IMR-90 (cell line): ENCODE measurements at regions of chr3 and their contacts with region 1.

Region 1: GRCh38 chr3:53881691-53882593 is at the start of gene ACTR8:
- DNase-seq: peak; percentile 77
- ATAC-seq: peak; percentile 97
- H3K4me3 ChIP-seq: peak within 1 kb of the TSS; percentile 73
- H3K27ac ChIP-seq: peak within 1 kb of the TSS; percentile 97
- H3K4me1 ChIP-seq: peaks cover 8% of the 10 kb centered on the region
- H3K27me3 ChIP-seq: no peaks in the 10 kb centered on the region
- CTCF ChIP-seq: 0 out of 2 replicates have a peak, but pooled peaks have one; percentile 4
- POLR2A ChIP-seq: peak; percentile 81
- RAD21 ChIP-seq: no peak
- total RNA-seq, gene ACTR8: 31.4 and 35.8 TPM in 2 replicates

Region 2: GRCh38 chr3:53287131-53287629 is 594.8 kb before region 1 on chr3:
- CTCF ChIA-PET with region 1: no interaction called
- POLR2A ChIA-PET with region 1: no interaction called
- dilution Hi-C with region 1: no loop called
- in situ Hi-C with region 1: loop called (anchors 25 kb)
- intact Hi-C with region 1: no loop called
- DNase-seq: peak; percentile 76
- ATAC-seq: peak; percentile 85
- H3K4me3 ChIP-seq: no peak overlapping the region
- H3K27ac ChIP-seq: peak overlapping the region; percentile 43; the same call in 1 of the 2 replicates
- H3K4me1 ChIP-seq: peaks cover 6% of the 10 kb centered on the region
- H3K27me3 ChIP-seq: no peaks in the 10 kb centered on the region
- CTCF ChIP-seq: no peak
- POLR2A ChIP-seq: no peak
- RAD21 ChIP-seq: no peak

Region 3: DNA sequence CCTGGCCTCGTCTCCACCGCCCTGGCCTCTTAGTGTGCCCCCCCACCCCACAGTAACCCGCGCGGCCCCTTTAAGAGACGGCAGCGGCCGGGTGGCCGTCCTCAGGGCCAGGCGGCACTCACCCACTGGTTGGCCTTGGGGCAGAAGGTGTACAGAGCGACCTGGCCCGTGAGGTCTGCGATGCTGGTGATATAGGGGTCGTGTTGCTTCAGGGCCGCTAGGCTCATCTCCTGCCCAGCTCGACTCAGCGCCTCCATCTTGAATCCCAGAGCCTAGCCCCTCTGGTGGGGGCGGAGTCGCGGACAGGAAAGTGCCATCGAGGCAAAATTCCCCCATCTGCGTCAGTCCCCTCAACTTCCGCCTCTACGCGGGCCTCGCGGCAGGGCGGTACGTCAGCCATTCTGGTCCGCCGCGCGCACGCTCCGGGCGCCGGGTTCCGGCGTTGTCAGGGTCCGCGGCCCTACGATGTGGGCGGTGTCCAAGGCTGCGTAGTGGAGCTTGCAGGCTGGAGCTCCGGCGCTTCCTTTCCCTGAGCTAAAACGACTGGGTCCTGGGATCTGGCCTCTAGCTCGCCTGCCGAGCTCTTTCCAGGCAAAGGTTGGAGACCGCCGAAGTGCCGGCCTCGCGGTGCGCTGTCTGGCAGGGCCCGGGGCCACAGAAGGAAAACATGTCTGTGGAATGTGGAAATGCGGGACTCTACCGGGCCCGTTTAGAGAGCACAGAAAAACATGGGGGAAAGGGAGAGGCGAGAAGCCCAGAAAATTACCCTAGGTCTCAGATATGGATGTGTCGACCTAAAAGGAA is 534.5 kb before region 1 on chr3 and contains the start of gene DCP1A:
- CTCF ChIA-PET with region 1: no interaction called
- POLR2A ChIA-PET with region 1: no interaction called
- dilution Hi-C with region 1: no loop called
- in situ Hi-C with region 1: no loop called
- intact Hi-C with region 1: loop called (anchors 10 kb)
- DNase-seq: peak; percentile 97
- ATAC-seq: peak; percentile 97
- H3K4me3 ChIP-seq: peak within 1 kb of the TSS; percentile 82
- H3K27ac ChIP-seq: peak within 1 kb of the TSS; percentile 97
- H3K4me1 ChIP-seq: no peaks in the 10 kb centered on the region; the same call in 1 of the 2 replicates
- H3K27me3 ChIP-seq: no peaks in the 10 kb centered on the region
- CTCF ChIP-seq: no peak
- POLR2A ChIP-seq: peak; percentile 97
- RAD21 ChIP-seq: no peak
- total RNA-seq, gene DCP1A: 18.6 and 30.1 TPM in 2 replicates

Region 4: GRCh38 chr3:53795789-53796560 is 86.0 kb before region 1 on chr3:
- CTCF ChIA-PET with region 1: no interaction called
- POLR2A ChIA-PET with region 1: no interaction called
- dilution Hi-C with region 1: no loop called
- in situ Hi-C with region 1: no loop called
- intact Hi-C with region 1: no loop called
- DNase-seq: no peak
- ATAC-seq: no peak
- H3K4me3 ChIP-seq: no peak overlapping the region
- H3K27ac ChIP-seq: no peak overlapping the region
- H3K4me1 ChIP-seq: no peaks in the 10 kb centered on the region
- H3K27me3 ChIP-seq: peaks cover 11% of the 10 kb centered on the region
- CTCF ChIP-seq: no peak
- POLR2A ChIP-seq: no peak
- RAD21 ChIP-seq: no peak

Region 5: DNA sequence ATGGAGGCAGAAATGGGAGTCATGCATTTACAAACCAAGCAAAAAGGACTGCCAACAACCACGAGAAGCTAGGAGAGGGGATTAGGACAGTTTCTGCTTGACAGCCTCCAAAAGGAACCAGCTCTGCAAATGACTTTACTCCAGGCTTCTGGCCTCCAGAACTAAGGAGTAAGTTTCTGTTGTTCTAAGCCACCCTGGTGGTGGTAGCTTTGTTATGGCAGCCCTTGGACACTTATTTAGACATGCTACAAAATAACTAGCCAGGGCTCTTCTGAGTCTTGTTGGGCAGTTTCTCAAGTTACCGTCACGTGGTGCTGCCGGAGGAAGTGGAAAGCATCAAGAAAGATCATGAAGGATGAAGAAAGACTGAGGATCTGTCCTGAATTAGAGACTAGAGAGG is 659.4 kb after region 1 on chr3:
- CTCF ChIA-PET with region 1: no interaction called
- POLR2A ChIA-PET with region 1: no interaction called
- dilution Hi-C with region 1: no loop called
- in situ Hi-C with region 1: no loop called
- intact Hi-C with region 1: no loop called
- DNase-seq: no peak
- ATAC-seq: no peak
- H3K4me3 ChIP-seq: no peak overlapping the region
- H3K27ac ChIP-seq: no peak overlapping the region
- H3K4me1 ChIP-seq: no peaks in the 10 kb centered on the region
- H3K27me3 ChIP-seq: no peaks in the 10 kb centered on the region
- CTCF ChIP-seq: no peak
- POLR2A ChIP-seq: no peak
- RAD21 ChIP-seq: no peak